T-cell (primary cell): ENCODE measurements at regions of chr11 and their contacts with region 1.

Region 1: GRCh38 chr11:17384002-17384511 is 4.4 kb downstream of the KCNJ11 start:
- DNase-seq: peak; percentile 42 to 90 (median 68)
- ATAC-seq: peak; percentile 47 to 68 (median 60)
- H3K4me3 ChIP-seq: no peak overlapping the region
- H3K4me3 Mint-ChIP-seq: no peak overlapping the region
- H3K27ac ChIP-seq: no peak overlapping the region
- H3K27ac Mint-ChIP-seq: no peak overlapping the region
- H3K4me1 ChIP-seq: peaks cover 0 to 8% of the 10 kb centered on the region in 2 experiments
- H3K4me1 Mint-ChIP-seq: peaks cover 0 to 4% (median 0%) of the 10 kb centered on the region in 3 donors
- H3K27me3 ChIP-seq: peaks cover 0 to 12% of the 10 kb centered on the region in 2 experiments
- H3K27me3 Mint-ChIP-seq: no peaks in the 10 kb centered on the region

Region 2: DNA sequence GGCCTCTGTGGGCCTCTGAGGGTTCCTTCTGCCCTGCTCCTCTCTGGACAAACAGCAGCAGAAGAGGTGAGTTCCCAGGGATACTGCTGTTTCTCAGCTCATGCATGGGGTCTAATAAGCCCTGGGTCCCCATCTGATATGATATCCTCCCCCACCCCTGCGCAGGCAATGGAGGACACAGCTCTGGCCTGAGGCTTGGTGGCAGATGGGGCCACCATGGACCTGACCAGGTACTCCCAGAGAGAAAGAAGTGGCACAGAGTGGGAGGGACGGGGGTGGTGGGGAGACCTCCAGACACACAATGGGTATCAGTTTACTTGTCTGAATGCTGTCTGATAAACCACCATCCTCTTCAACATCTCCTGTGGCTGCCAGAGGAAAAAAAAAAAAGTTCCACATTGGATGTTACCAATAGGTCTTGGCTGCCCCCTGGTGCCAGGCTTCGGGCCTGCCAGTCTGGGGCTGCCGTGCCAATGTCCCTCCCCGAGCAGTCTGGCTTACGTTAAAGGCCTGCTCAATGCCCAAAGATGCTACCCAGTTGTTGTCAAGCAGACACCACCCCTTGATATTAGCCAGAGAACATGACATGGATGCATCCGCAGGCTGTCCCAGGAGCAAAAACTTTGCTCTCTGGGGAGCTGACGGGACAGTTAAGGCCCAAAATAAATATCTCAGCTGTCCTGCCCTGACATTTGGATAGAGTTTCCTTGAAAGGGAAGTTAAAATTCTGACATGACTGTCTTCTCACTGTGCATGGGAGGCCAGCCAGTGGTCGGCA is 120.5 kb after region 1 on chr11:
- CTCF ChIA-PET with region 1: interaction called, 7 to 10 read pairs
- POLR2A ChIA-PET with region 1: no interaction called
- DNase-seq: peak; percentile 47 to 83 (median 72)
- ATAC-seq: peak; percentile 67 to 85 (median 76)
- H3K4me3 ChIP-seq: no peak overlapping the region
- H3K4me3 Mint-ChIP-seq: no peak overlapping the region
- H3K27ac ChIP-seq: no peak overlapping the region
- H3K27ac Mint-ChIP-seq: no peak overlapping the region
- H3K4me1 ChIP-seq: no peaks in the 10 kb centered on the region
- H3K4me1 Mint-ChIP-seq: no peaks in the 10 kb centered on the region
- H3K27me3 ChIP-seq: peaks cover 0 to 8% of the 10 kb centered on the region in 2 experiments
- H3K27me3 Mint-ChIP-seq: peaks cover 6 to 8% of the 10 kb centered on the region in 2 donors

Region 3: GRCh38 chr11:17528181-17528691 is 144.2 kb after region 1 on chr11:
- CTCF ChIA-PET with region 1: interaction called, 5 to 12 read pairs
- POLR2A ChIA-PET with region 1: no interaction called
- DNase-seq: peak in 26 of 35 experiments; percentile 4 to 50 (median 25)
- ATAC-seq: peak in 3 of 4 experiments; percentile 50 to 54 (median 52)
- H3K4me3 ChIP-seq: no peak overlapping the region
- H3K4me3 Mint-ChIP-seq: no peak overlapping the region
- H3K27ac ChIP-seq: no peak overlapping the region
- H3K27ac Mint-ChIP-seq: no peak overlapping the region
- H3K4me1 ChIP-seq: no peaks in the 10 kb centered on the region
- H3K4me1 Mint-ChIP-seq: no peaks in the 10 kb centered on the region
- H3K27me3 ChIP-seq: peaks cover 0 to 24% of the 10 kb centered on the region in 2 experiments
- H3K27me3 Mint-ChIP-seq: peaks cover 0 to 13% of the 10 kb centered on the region in 2 donors